ENCODE measurements at regions of chr3 and their contacts with region 1.

Region 1: GRCh38 chr3:149393345-149394160 is 16.1 kb upstream of the TM4SF1 start:
- DNase-seq: peak; percentile 74
- ATAC-seq: peak; percentile 78

Region 2: DNA sequence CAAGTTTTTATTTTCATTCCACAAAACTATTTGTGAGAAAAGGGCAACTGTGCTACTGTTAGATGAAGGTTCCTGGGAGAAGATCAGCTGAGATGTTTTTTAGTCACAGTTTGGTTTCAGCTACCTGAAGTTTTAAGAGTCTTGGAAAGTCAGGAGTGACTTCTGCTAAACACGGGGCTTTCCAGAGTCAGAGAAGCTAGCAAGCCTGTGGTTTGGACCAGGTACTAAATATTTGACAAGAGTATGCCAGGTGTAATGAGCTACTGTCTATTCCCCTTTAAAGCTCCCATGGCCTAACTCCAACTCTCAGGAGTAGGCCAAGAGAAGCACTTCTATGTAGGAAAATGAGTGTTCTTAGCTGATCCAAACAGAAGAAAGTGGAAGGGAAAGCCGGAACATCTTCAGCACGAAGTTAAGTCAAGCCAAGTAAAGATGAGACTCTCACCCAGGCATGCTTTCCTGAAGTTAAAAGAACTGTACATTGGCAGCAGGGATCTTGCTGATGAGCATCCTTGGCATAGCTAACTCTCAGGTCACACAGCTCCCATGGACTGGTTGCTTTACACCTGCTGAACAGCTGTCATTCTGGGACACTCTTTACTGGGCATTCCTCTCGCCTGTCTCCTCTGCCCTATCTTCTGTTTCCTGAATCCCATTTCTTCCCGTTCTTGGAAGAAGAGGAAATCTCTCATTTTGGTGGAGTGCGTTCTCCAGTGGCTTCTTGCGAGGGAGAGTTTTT is 82.6 kb before region 1 on chr3:
- intact Hi-C with region 1: no loop called
- DNase-seq: no peak
- ATAC-seq: no peak

Region 3: DNA sequence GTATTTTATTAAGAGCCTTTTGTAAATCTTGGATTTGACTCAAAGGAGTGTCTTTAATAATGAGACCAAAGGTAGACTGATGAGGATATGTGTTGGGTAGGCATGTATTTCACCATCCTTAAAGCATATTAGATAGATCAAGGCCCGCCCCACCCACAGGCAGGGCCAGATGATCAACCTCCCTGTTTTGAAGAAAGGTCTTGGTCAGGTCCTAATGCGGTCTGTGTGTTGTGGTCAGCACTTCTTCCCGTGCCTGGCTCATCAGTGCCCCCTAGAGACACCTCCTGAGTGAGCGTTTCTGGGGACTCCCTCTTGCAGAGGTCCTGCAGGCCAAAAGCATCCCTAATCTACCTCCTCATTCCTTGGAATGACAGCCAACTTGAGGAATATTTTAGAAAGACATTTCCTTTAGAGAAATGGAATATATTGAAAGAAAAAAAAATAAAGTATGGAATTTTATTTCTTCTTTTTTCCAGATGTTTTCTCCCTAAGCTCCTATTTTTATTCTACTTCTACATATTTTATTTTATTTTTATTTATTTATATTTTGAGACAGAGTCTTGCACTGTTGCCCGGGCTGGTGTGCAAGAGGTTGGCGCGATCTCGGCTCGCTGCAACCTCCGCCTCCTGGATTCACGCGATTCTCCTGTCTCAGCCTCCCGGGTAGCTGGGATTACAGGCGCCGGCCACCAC is 86.9 kb after region 1 on chr3:
- intact Hi-C with region 1: loop called (anchors 5 kb)
- DNase-seq: peak; percentile 75
- ATAC-seq: peak; percentile 98

Region 4: DNA sequence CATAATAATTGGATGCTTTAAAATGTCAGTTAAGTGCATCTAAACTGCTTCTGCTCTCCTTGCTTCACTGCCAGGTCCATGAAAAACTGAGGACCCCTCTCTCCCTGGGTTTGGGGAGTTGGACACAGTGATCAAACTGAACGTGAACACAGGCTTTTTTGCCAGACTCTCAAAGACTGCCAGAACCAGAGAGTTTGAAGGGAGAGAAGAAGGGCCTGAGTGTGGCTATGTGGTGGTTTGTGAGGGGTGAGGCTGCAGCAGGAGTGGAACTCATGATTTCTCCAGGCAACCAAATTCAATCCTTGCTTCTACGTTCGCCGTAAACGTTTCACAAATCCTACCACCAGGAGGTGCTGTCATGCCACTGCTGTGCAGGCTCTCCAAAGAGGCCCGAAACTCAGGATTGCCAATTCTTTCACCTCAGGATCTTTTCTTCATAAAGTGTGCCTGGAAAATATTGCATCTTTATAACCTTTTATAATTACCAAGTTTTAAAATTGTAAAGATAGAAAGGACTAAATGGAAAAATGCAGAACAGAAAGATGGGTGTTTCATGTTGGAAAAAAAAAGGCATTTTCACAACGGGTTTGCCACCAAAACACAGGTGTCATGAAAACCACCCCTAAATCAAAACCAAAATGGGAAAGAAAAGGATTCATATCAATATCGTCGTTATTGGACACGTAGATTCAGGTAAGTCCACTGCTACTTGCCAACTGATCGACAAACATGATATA is 100.6 kb after region 1 on chr3:
- intact Hi-C with region 1: no loop called
- DNase-seq: peak; percentile 56
- ATAC-seq: peak; percentile 65

Measured in left ventricle myocardium superior (tissue), 1 donor.